Activated CD8-positive, alpha-beta T cell treated with anti-CD3 and anti-CD28 coated beads for 36 hours (primary cell): ENCODE measurements at regions of chr16 and their contacts with region 1.

Region 1: GRCh38 chr16:4649744-4650442 is 25.3 kb downstream of the MGRN1 start:
- DNase-seq: peak; percentile 47
- ATAC-seq: peak; percentile 49
- H3K4me3 Mint-ChIP-seq: no peak overlapping the region
- H3K27ac Mint-ChIP-seq: no peak overlapping the region
- H3K4me1 Mint-ChIP-seq: peaks cover 39% of the 10 kb centered on the region
- H3K27me3 Mint-ChIP-seq: no peaks in the 10 kb centered on the region
- CTCF ChIP-seq: no peak

Region 2: DNA sequence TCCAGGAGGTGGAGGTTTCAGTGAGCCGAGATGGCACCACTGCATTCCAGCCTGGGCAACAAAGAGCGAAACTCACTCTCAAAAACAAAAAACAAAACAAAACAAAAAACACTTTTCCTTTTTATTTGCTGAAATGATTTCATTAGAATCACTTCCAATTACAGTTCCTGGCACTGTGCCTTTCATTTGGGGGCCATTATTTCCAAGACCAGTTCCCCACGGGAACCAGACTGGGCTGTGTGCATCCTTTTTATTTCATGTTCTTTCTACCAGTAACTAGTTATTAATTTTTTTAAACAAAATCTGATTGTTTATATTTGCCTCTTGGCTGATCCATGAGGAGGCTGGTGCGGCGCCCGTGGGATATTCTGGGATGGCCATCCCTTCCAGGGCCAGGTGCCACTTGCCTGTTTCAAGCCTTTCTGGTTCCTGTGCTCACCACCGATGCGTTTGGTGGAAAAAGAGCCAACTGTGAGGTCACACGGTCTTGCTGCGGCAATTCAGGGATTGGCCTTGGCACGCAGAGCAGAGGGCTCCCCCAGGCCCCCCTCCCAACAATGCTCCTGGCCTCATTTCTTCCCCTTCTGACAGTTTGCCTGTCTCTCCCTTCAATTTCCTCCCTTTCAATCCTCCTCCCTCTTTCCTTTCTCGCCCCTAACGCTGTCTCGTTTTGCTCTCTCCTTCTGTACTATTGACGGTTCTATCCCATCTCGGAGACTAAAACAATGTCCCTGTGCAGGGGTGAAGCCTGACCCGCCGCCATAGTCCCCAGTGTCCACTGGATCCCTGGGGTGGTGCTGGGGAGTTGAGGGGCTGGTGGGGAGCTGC is 48.6 kb before region 1 on chr16:
- CTCF ChIA-PET with region 1: no interaction called
- POLR2A ChIA-PET with region 1: no interaction called
- intact Hi-C with region 1: no loop called
- DNase-seq: no peak
- ATAC-seq: no peak
- H3K4me3 Mint-ChIP-seq: no peak overlapping the region
- H3K27ac Mint-ChIP-seq: no peak overlapping the region
- H3K4me1 Mint-ChIP-seq: no peaks in the 10 kb centered on the region
- H3K27me3 Mint-ChIP-seq: no peaks in the 10 kb centered on the region
- CTCF ChIP-seq: no peak

Region 3: DNA sequence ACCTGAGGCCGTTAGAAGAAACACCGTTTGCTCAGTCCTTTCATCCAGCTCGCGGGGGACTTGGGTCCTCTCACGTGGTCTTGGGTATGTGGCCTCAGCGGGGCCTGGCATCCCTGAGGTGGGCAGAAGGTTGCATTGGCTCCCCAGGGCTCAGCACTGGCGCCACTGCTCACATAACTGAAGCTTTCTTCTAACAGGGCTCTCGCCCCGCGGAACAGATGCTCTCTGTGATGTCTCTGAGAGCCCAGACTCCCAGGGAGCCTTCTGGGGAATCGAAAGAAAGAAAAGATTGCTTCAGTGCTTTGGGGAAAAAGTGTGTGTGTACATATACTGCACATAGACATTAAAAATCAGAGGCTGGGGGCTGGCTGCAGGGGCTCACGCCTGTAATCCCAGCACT is 15.1 kb before region 1 on chr16:
- CTCF ChIA-PET with region 1: interaction called, 10 read pairs
- POLR2A ChIA-PET with region 1: no interaction called
- intact Hi-C with region 1: no loop called
- DNase-seq: no peak
- ATAC-seq: no peak
- H3K4me3 Mint-ChIP-seq: no peak overlapping the region
- H3K27ac Mint-ChIP-seq: no peak overlapping the region
- H3K4me1 Mint-ChIP-seq: peaks cover 20% of the 10 kb centered on the region
- H3K27me3 Mint-ChIP-seq: no peaks in the 10 kb centered on the region
- CTCF ChIP-seq: no peak

Region 4: GRCh38 chr16:4660454-4661007 is 10.6 kb after region 1 on chr16:
- CTCF ChIA-PET with region 1: interaction called, 23 read pairs
- POLR2A ChIA-PET with region 1: interaction called, 6 read pairs
- intact Hi-C with region 1: no loop called
- DNase-seq: peak; percentile 97
- ATAC-seq: peak; percentile 77
- H3K4me3 Mint-ChIP-seq: no peak overlapping the region
- H3K27ac Mint-ChIP-seq: peak overlapping the region; percentile 76
- H3K4me1 Mint-ChIP-seq: peaks cover 62% of the 10 kb centered on the region
- H3K27me3 Mint-ChIP-seq: no peaks in the 10 kb centered on the region
- CTCF ChIP-seq: no peak